ENCODE measurements at regions of chr3 and their contacts with region 1.

Region 1: GRCh38 chr3:32502118-32502945 is at the start of gene CMTM6:
- DNase-seq: peak; percentile 91
- H3K4me3 ChIP-seq: peak within 1 kb of the TSS; percentile 67 to 98 (median 95)
- H3K27ac ChIP-seq: peak within 1 kb of the TSS; percentile 96 to 99 (median 97)
- H3K4me1 ChIP-seq: peaks cover 0 to 22% (median 18%) of the 10 kb centered on the region in 4 donors
- H3K27me3 ChIP-seq: no peaks in the 10 kb centered on the region
- CTCF ChIP-seq: no peak
- EP300 ChIP-seq: peak in 1 of 4 donors; percentile 32
- POLR2A ChIP-seq: peak; percentile 37 to 49
- total RNA-seq, gene CMTM6: 37.7 to 82.0 (median 55.4) TPM

Region 2: GRCh38 chr3:32684800-32685542 is 182.6 kb after region 1 on chr3 and contains the start of gene CNOT10:
- intact Hi-C with region 1: loop called (anchors 5 kb)
- DNase-seq: peak; percentile 96
- H3K4me3 ChIP-seq: peak within 1 kb of the TSS; percentile 66 to 97 (median 73)
- H3K27ac ChIP-seq: peak within 1 kb of the TSS; percentile 80 to 87 (median 85)
- H3K4me1 ChIP-seq: peaks cover 0 to 19% (median 17%) of the 10 kb centered on the region in 4 donors
- H3K27me3 ChIP-seq: no peaks in the 10 kb centered on the region
- CTCF ChIP-seq: peak in 2 of 4 experiments; percentile 15 to 16
- EP300 ChIP-seq: no peak
- POLR2A ChIP-seq: peak; percentile 9 to 27
- total RNA-seq, gene CNOT10: 13.0 to 33.5 (median 21.6) TPM

Measured in sigmoid colon (tissue), 7 donors.